ENCODE measurements at regions of chr2 and their contacts with region 1.

Region 1: DNA sequence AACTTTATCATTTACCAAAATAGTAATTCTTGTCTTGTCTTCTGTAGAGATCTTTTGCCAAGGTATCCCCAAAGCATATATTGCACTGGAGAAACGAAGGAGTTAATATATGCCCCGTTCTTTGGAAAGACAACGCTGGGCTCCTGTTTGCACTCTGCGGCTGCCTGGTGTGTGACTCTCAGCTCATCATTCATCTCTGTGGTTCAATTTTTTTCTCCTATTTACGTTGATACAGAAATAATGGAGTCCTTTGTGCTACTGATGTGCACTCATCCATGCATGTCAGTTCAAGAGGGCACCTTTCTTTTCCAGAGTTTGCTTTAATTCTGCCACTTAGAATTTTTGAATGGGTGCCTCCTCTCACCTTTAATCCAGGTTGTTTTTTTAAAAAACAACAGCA is 655.5 kb downstream of the DCDC2C start:
- DNase-seq: no peak

Region 2: GRCh38 chr2:4279431-4279830 is 79.4 kb before region 1 on chr2:
- intact Hi-C with region 1: no loop called
- DNase-seq: no peak

Region 3: GRCh38 chr2:4381049-4381448 is 22.2 kb after region 1 on chr2:
- intact Hi-C with region 1: loop called in 1 of 2 experiments (anchors 2 kb)
- DNase-seq: no peak

Region 4: DNA sequence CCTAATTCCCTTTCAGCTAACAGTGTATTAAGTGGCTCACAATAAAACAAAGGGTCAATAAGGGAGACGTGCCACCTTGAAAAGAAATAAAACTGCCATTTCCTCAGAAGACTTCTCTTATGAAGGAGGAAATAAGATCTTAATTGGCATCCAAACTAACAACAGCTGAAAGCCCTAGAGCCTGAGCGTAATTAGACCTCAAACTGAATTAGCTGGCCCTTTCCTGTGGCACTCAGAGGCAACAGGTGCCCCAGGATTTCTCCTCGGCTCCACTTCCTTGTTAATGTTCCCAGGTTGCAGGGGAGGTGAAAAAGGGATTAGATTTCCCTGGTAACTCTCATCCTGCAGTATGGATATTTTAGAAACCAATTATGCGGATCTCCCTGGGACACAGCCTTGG is 148.8 kb after region 1 on chr2:
- intact Hi-C with region 1: no loop called
- DNase-seq: no peak

Measured in posterior vena cava (tissue), 2 donors.